PC-3 (cell line): ENCODE measurements at regions of chrX and their contacts with region 1.

Region 1: DNA sequence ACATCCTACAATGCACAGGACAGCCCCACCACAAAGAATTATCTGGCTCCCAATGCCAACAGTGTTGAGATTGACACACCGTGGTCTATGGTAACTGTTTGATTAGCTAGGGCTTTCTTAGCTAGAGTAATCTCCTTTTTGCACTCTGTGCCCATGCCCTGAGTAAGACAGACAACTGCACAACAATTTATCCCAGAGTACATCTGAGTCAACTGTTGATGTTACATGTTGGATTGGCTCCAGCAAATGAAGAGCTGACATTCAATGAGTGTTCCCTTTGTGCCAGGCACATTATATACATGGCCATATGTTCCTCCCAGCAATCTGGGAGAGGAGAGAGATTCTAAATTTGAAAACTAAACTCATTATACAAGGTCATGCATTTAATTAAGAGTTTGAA is 3.9 kb upstream of the FAM9C start:
- DNase-seq: peak; percentile 62
- ATAC-seq: no peak
- H3K4me3 ChIP-seq: no peak overlapping the region
- H3K27ac ChIP-seq: no peak overlapping the region
- H3K4me1 ChIP-seq: 0 out of 2 replicates have a peak, but pooled peaks cover 7% of the 10 kb centered on the region
- H3K27me3 ChIP-seq: no peaks in the 10 kb centered on the region
- CTCF ChIP-seq: no peak

Region 2: GRCh38 chrX:11445540-11445939 is 1602.7 kb before region 1 on chrX:
- CTCF ChIA-PET with region 1: no interaction called
- POLR2A ChIA-PET with region 1: no interaction called
- intact Hi-C with region 1: loop called (anchors 10 kb)
- DNase-seq: peak; percentile 3
- ATAC-seq: no peak
- H3K4me3 ChIP-seq: no peak overlapping the region
- H3K27ac ChIP-seq: no peak overlapping the region
- H3K4me1 ChIP-seq: no peaks in the 10 kb centered on the region
- H3K27me3 ChIP-seq: no peaks in the 10 kb centered on the region
- CTCF ChIP-seq: peak; percentile 32; the same call in 1 of the 2 replicates

Region 3: GRCh38 chrX:12994276-12994675 is 54.0 kb before region 1 on chrX:
- CTCF ChIA-PET with region 1: no interaction called
- POLR2A ChIA-PET with region 1: no interaction called
- intact Hi-C with region 1: no loop called
- DNase-seq: peak; percentile 65
- ATAC-seq: no peak; the same call in 1 of the 2 replicates
- H3K4me3 ChIP-seq: no peak overlapping the region
- H3K27ac ChIP-seq: peak overlapping the region; percentile 38
- H3K4me1 ChIP-seq: peaks cover 29% of the 10 kb centered on the region
- H3K27me3 ChIP-seq: no peaks in the 10 kb centered on the region
- CTCF ChIP-seq: no peak

Region 4: GRCh38 chrX:13257223-13258051 is 209.2 kb after region 1 on chrX:
- CTCF ChIA-PET with region 1: no interaction called
- POLR2A ChIA-PET with region 1: no interaction called
- intact Hi-C with region 1: no loop called
- DNase-seq: no peak
- ATAC-seq: no peak
- H3K4me3 ChIP-seq: no peak overlapping the region
- H3K27ac ChIP-seq: no peak overlapping the region
- H3K4me1 ChIP-seq: no peaks in the 10 kb centered on the region
- H3K27me3 ChIP-seq: no peaks in the 10 kb centered on the region
- CTCF ChIP-seq: no peak